CD4-positive, alpha-beta memory T cell (primary cell): ENCODE measurements at regions of chr20 and their contacts with region 1.

Region 1: GRCh38 chr20:58650776-58651558 is at the start of gene STX16:
- DNase-seq: peak; percentile 81 to 87 (median 82)
- H3K4me3 ChIP-seq: peak within 1 kb of the TSS; percentile 94 to 96
- H3K4me3 Mint-ChIP-seq: peak within 1 kb of the TSS; percentile 98 to 99 (median 99)
- H3K27ac ChIP-seq: peak within 1 kb of the TSS; percentile 94
- H3K27ac Mint-ChIP-seq: peak within 1 kb of the TSS; percentile 97 to 100 (median 99)
- H3K4me1 ChIP-seq: peaks cover 38% of the 10 kb centered on the region
- H3K4me1 Mint-ChIP-seq: peaks cover 9 to 45% (median 20%) of the 10 kb centered on the region in 4 donors
- H3K27me3 ChIP-seq: no peaks in the 10 kb centered on the region
- H3K27me3 Mint-ChIP-seq: peaks cover 0 to 1% of the 10 kb centered on the region in 2 donors
- total RNA-seq, gene STX16: 158 to 167 TPM

Region 2: GRCh38 chr20:58236612-58237330 is 414.2 kb before region 1 on chr20:
- CTCF ChIA-PET with region 1: interaction called, 9 read pairs
- POLR2A ChIA-PET with region 1: no interaction called
- intact Hi-C with region 1: loop called (anchors 1 kb)
- DNase-seq: peak; percentile 73 to 81 (median 77)
- H3K4me3 ChIP-seq: peak overlapping the region; percentile 26 to 70
- H3K4me3 Mint-ChIP-seq: peak overlapping the region; percentile 86 to 93 (median 92)
- H3K27ac ChIP-seq: peak overlapping the region; percentile 62
- H3K27ac Mint-ChIP-seq: peak overlapping the region; percentile 83 to 97 (median 92)
- H3K4me1 ChIP-seq: peaks cover 5% of the 10 kb centered on the region
- H3K4me1 Mint-ChIP-seq: peaks cover 3 to 18% (median 11%) of the 10 kb centered on the region in 4 donors
- H3K27me3 ChIP-seq: no peaks in the 10 kb centered on the region
- H3K27me3 Mint-ChIP-seq: no peaks in the 10 kb centered on the region

Region 3: DNA sequence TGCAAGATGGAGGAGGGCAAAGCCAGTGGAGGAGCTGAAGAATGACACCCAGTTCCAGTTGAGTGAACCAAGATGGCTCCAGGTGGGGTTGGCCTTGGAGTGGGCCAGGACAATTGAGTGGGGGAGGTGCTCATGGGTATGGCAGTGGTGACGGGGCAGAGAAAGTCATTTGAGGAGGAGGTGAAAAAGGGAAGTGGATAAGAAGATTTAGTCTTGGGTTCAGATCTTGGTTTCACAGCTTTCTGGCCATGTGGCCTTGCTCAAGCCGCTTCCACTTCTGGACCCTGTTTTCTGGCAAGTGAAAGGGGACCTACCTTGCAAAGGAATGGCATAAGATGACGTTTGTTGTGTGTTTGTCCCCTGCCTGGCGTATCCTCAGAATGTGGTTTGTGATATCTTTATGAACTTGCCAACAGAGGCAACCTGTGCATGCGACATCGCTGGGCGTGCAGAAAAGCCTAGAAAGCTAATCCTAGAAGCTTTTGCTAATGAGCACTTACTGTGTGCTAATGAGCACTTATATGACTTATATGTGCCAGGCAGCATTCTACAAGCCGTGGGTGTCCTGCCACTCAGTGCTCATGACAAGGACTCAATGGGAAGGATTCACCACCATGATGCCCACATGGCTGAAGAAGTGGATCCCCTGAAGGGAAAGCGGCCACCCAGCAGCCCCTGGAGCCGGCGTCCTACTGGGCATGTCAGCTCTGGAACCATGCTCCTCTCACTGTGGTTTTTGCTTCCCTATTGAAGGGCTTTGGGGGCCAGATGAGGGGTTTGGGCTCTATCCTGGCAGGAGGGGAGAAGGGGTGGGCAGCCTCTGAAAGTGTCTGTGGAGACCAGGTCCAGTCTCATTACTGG is 23.5 kb before region 1 on chr20:
- CTCF ChIA-PET with region 1: interaction called, 3 read pairs
- POLR2A ChIA-PET with region 1: interaction called, 20 read pairs
- intact Hi-C with region 1: no loop called
- DNase-seq: peak in 2 of 5 donors; percentile 64 to 71
- H3K4me3 ChIP-seq: no peak overlapping the region
- H3K4me3 Mint-ChIP-seq: peak overlapping the region in 2 of 8 donors; percentile 14 to 77
- H3K27ac ChIP-seq: no peak overlapping the region
- H3K27ac Mint-ChIP-seq: peak overlapping the region in 4 of 7 donors; percentile 25 to 97 (median 90)
- H3K4me1 ChIP-seq: peaks cover 6% of the 10 kb centered on the region
- H3K4me1 Mint-ChIP-seq: peaks cover 0 to 21% (median 8%) of the 10 kb centered on the region in 4 donors
- H3K27me3 ChIP-seq: no peaks in the 10 kb centered on the region
- H3K27me3 Mint-ChIP-seq: peaks cover 0 to 8% of the 10 kb centered on the region in 2 donors

Region 4: DNA sequence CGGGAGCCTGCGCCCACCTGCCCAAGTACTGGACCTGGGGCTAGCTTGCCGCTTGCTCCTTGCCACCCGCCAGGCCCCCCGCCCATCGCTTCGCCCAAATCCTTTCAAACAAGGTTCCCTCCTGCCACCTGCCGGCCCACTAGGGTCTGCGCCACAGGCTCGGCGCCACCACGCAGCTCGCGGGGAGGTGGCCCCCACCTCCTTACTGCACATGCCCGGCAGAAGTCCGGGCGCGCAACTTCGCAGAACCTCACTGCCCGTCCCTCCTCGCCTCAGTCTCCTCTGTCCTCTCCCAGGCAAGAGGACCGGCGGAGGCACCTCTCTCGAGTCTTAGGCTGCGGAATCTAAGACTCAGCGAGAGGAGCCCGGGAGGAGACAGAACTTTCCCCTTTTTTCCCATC is 188.5 kb after region 1 on chr20:
- CTCF ChIA-PET with region 1: interaction called, 10 read pairs
- POLR2A ChIA-PET with region 1: interaction called, 5 read pairs
- intact Hi-C with region 1: loop called (anchors 5 kb)
- DNase-seq: peak in 4 of 5 donors; percentile 26 to 40 (median 35)
- H3K4me3 ChIP-seq: no peak overlapping the region
- H3K4me3 Mint-ChIP-seq: peak overlapping the region in 7 of 8 donors; percentile 15 to 70 (median 48)
- H3K27ac ChIP-seq: no peak overlapping the region
- H3K27ac Mint-ChIP-seq: no peak overlapping the region
- H3K4me1 ChIP-seq: no peaks in the 10 kb centered on the region
- H3K4me1 Mint-ChIP-seq: peaks cover 0 to 11% (median 3%) of the 10 kb centered on the region in 4 donors
- H3K27me3 ChIP-seq: peaks cover 4% of the 10 kb centered on the region
- H3K27me3 Mint-ChIP-seq: peaks cover 20 to 27% of the 10 kb centered on the region in 2 donors

Region 5: GRCh38 chr20:58883241-58883691 is 232.3 kb after region 1 on chr20:
- CTCF ChIA-PET with region 1: no interaction called
- POLR2A ChIA-PET with region 1: no interaction called
- intact Hi-C with region 1: no loop called
- DNase-seq: no peak
- H3K4me3 ChIP-seq: no peak overlapping the region
- H3K4me3 Mint-ChIP-seq: no peak overlapping the region
- H3K27ac ChIP-seq: no peak overlapping the region
- H3K27ac Mint-ChIP-seq: no peak overlapping the region
- H3K4me1 ChIP-seq: peaks cover 10% of the 10 kb centered on the region
- H3K4me1 Mint-ChIP-seq: peaks cover 1 to 9% (median 7%) of the 10 kb centered on the region in 4 donors
- H3K27me3 ChIP-seq: no peaks in the 10 kb centered on the region
- H3K27me3 Mint-ChIP-seq: no peaks in the 10 kb centered on the region

Region 6: DNA sequence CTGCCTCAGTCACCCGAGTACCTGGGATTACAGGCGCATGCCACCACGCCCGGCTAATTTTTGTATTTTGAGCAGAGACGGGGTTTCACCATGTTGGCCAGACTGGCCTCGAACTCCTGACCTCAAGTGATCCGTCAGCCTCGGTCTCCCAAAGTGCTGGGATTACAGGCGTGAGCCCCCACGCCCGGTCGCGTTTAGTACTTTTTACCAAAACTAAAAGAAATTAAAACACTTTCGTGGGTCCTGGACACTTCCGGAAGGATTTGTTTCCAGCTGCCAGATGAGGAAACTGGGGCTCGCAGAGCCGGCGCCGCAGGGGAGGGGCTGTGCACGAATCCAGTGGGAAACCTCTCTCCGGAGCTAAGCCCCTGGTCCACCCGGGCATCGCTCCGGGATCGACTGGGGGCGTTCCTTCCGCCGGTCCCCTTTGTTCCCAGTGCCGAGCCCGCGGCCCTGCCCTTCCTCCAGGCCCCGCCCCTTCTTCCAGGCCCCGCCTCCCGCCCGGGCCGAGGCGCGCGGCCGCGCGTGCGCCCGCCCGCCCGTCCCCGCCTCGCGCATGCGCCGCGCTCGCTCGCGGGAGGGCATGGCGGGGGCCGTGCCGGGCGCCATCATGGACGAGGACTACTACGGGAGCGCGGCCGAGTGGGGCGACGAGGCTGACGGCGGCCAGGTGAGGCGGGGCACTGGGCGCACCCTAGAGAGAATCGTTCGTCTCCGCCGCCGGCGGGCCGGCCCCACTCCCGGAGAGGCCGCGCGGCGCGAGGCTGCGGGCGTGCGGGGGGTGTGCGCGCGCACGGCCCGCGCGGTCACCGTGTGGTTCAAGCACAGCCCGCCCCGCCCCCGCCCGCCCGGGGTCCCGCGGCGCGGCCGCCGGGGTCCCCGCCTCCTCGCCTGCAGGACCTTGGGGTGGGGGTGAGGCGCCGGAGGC is 330.0 kb after region 1 on chr20 and contains the start of gene NELFCD:
- CTCF ChIA-PET with region 1: no interaction called
- POLR2A ChIA-PET with region 1: interaction called, 4 read pairs
- intact Hi-C with region 1: loop called (anchors 5 kb)
- DNase-seq: peak; percentile 84 to 90 (median 88)
- H3K4me3 ChIP-seq: peak within 1 kb of the TSS; percentile 82 to 95
- H3K4me3 Mint-ChIP-seq: peak within 1 kb of the TSS; percentile 91 to 97 (median 94)
- H3K27ac ChIP-seq: peak within 1 kb of the TSS; percentile 66
- H3K27ac Mint-ChIP-seq: peak within 1 kb of the TSS; percentile 72 to 97 (median 93)
- H3K4me1 ChIP-seq: peaks cover 41% of the 10 kb centered on the region
- H3K4me1 Mint-ChIP-seq: peaks cover 29 to 39% (median 33%) of the 10 kb centered on the region in 4 donors
- H3K27me3 ChIP-seq: no peaks in the 10 kb centered on the region
- H3K27me3 Mint-ChIP-seq: no peaks in the 10 kb centered on the region
- total RNA-seq, gene NELFCD: 77.6 to 93.3 TPM

Region 7: DNA sequence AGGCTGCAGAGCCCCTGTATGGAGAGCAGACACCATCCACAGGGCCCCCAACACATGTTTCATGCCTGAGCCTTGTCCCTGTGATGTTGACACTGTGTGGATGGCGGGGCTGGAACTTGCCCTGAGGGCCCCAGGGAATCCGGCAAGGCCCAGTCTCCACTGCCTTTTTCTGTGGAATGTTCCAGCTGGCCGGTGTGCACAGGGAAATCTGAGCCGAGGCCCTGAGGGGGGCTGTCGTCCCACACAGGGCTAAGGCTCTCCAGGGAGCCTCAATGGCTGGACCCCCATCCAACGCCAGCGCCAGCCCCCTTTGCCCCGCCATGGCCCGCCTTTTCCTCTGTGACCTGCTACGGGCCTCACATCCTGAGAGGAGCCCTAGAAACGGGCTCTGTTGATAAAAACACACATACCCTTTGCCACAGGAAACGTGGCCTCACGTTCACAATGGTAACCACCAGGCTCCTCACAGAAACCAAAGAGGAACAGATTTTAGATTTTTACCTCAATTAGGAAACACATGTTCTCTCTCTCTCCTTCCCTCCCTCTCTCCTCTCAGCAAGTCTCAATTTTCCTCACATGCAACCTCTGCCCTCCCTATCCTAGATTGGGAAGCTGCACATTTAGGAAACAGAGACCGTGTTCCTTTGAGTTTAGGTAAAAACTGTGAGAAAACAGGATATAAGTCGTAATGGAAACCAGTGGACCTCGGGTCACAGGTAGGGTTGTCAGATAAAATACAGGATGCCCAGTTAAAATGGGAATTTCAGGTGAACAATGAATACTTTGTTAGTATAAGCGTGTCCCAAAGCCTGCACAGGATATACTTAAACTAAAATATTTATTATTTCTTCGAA is 498.9 kb after region 1 on chr20:
- CTCF ChIA-PET with region 1: no interaction called
- POLR2A ChIA-PET with region 1: interaction called, 4 read pairs
- intact Hi-C with region 1: loop called (anchors 5 kb)
- DNase-seq: peak; percentile 88 to 93 (median 91)
- H3K4me3 ChIP-seq: peak overlapping the region in 1 of 2 donors; percentile 2
- H3K4me3 Mint-ChIP-seq: peak overlapping the region; percentile 73 to 91 (median 80)
- H3K27ac ChIP-seq: peak overlapping the region; percentile 93
- H3K27ac Mint-ChIP-seq: peak overlapping the region; percentile 96 to 100 (median 100)
- H3K4me1 ChIP-seq: peaks cover 92% of the 10 kb centered on the region
- H3K4me1 Mint-ChIP-seq: peaks cover 72 to 97% (median 88%) of the 10 kb centered on the region in 4 donors
- H3K27me3 ChIP-seq: no peaks in the 10 kb centered on the region
- H3K27me3 Mint-ChIP-seq: no peaks in the 10 kb centered on the region